ENCODE measurements at regions of chr20 and their contacts with region 1.

Region 1: GRCh38 chr20:5914859-5915258 is 35.5 kb downstream of the TRMT6 start:
- DNase-seq: no peak
- H3K27ac ChIP-seq: no peak overlapping the region
- CTCF ChIP-seq: no peak

Region 2: DNA sequence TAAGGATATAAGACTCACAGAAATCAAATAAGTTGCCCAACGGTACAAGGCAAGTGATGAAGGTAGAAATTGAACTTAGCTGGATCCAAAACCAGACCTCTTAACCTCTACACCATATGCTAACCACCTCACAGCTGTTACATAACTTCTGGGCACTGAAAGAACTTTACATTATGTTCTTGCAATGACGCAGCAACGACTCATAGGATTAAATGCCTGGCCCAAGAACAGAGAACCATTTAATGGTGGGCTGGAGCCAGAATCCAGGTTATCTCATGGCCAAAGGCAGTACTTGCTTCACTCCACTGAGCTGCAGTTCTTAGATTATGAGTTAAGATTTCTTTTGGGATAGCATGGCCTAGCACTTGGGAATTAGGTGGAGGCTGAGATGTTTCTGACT is 31.1 kb after region 1 on chr20:
- CTCF ChIA-PET with region 1: interaction called, 12 read pairs
- POLR2A ChIA-PET with region 1: no interaction called
- DNase-seq: peak; percentile 81
- H3K27ac ChIP-seq: no peak overlapping the region
- CTCF ChIP-seq: no peak

Region 3: GRCh38 chr20:5977223-5977622 is 62.4 kb after region 1 on chr20:
- CTCF ChIA-PET with region 1: no interaction called
- POLR2A ChIA-PET with region 1: no interaction called
- DNase-seq: no peak
- H3K27ac ChIP-seq: no peak overlapping the region
- CTCF ChIP-seq: no peak

Measured in RWPE1 (cell line).